ENCODE measurements at regions of chr19 and their contacts with region 1.

Region 1: DNA sequence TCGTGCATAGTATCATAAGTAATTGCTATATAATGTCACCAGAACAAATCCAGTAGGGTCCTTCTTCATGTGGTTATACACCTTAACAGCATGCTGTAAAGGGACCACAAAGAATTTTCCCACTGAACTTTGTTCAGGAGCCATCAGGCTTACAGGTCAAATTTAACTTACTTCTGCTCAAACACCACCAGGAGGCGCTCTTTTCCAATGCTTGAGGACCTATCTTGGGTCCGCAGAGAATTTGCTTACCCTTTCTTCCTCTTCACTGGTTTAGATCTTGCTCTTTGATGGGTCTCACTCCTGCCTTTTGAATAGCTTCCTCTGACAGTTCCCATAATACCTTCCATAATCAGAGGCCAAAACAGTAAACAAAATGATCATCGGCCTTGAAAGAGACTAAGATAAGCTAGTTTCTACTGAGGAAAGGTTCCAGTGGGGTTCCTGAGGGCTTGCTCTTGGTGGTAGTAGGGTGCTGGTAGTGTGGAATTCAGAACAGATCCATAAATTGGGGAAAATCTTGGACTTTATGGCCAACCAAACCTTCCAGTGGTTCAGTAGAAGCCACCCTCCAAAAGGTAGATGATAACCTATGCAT is 37.4 kb downstream of the SCGB2B2 start:
- DNase-seq: peak in 31 of 35 experiments; percentile 30 to 90 (median 52)
- ATAC-seq: peak; percentile 45 to 75 (median 68)
- H3K4me3 ChIP-seq: no peak overlapping the region
- H3K4me3 Mint-ChIP-seq: no peak overlapping the region
- H3K27ac ChIP-seq: no peak overlapping the region
- H3K27ac Mint-ChIP-seq: no peak overlapping the region
- H3K4me1 ChIP-seq: no peaks in the 10 kb centered on the region
- H3K4me1 Mint-ChIP-seq: peaks cover 0 to 6% (median 0%) of the 10 kb centered on the region in 3 donors
- H3K27me3 ChIP-seq: no peaks in the 10 kb centered on the region
- H3K27me3 Mint-ChIP-seq: no peaks in the 10 kb centered on the region

Region 2: DNA sequence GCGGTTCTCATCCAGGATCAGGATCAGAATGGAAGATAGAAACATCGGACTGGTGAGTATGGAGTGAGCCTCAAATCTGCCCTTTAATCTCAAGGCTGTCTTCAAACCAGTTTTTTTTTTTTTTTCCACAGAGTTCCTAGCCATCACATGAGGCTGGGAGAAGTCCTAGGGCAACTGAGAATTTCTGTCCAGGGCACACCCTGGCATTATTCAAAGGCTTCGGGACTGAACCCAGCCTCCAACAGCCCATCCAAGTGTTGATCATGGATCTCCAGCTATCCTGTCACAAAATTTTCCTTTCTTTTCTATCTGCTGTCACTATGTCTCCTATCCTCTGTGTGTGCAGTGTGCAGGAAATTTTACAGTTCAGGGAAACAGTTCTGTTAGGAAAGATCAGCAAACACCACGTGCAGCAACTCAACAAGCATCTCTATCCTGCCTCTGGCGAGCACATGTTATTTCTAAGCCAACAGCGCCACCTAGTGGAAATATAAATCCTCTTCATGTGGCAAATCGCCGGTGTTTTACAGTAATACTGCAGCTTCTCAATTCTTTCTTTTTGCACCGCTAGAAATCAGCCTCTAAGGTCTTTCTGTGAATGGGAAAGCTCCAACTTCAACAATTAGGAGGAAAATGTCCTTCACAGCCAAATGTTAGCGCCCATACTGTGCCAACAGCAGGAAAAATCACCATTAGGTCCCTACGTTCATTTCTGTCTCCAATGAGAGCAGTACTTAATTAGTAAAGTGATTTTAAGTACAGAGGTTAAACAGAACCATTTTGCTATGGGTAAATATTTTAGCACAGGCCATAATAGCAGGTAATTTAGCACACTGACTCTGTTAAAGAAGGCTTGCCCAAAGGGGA is 73.0 kb after region 1 on chr19:
- CTCF ChIA-PET with region 1: interaction called, 18 to 24 read pairs
- POLR2A ChIA-PET with region 1: interaction called in 1 of 2 experiments, 3 read pairs
- DNase-seq: peak in 34 of 35 experiments; percentile 9 to 90 (median 48)
- ATAC-seq: peak; percentile 58 to 67 (median 64)
- H3K4me3 ChIP-seq: no peak overlapping the region
- H3K4me3 Mint-ChIP-seq: no peak overlapping the region
- H3K27ac ChIP-seq: no peak overlapping the region
- H3K27ac Mint-ChIP-seq: no peak overlapping the region
- H3K4me1 ChIP-seq: no peaks in the 10 kb centered on the region
- H3K4me1 Mint-ChIP-seq: no peaks in the 10 kb centered on the region
- H3K27me3 ChIP-seq: peaks cover 0 to 11% of the 10 kb centered on the region in 2 experiments
- H3K27me3 Mint-ChIP-seq: peaks cover 33 to 37% of the 10 kb centered on the region in 2 donors